Caco-2 (cell line): ENCODE measurements at regions of chr6 and their contacts with region 1.

Region 1: DNA sequence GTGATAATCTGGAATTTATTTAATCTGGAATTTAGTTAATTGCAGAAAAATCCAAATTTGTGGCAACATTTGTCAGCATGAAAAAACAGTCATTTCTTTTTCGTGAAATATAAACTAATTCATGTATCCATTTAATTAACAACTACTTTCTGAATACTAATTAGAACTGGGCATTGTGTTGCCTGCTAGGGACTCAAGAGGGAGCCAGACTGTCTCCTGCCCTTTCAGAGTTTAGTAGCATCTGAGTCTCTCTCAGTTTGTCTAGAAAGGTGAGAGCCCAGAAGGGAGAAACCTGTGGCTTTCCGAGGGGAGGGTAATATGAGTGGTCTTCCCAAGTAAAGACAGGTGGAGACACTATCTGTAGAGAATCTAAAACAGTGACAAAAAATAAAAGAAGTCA is 210.9 kb upstream of the HDDC2 start:
- DNase-seq: no peak
- H3K4me3 ChIP-seq: no peak overlapping the region
- H3K4me3 Mint-ChIP-seq: no peak overlapping the region
- H3K27ac Mint-ChIP-seq: no peak overlapping the region
- H3K4me1 ChIP-seq: no peaks in the 10 kb centered on the region
- H3K4me1 Mint-ChIP-seq: no peaks in the 10 kb centered on the region
- H3K27me3 ChIP-seq: no peaks in the 10 kb centered on the region
- H3K27me3 Mint-ChIP-seq: peaks cover 7% of the 10 kb centered on the region
- CTCF ChIP-seq: no peak

Region 2: GRCh38 chr6:125498606-125499005 is 14.0 kb before region 1 on chr6:
- CTCF ChIA-PET with region 1: no interaction called
- POLR2A ChIA-PET with region 1: no interaction called
- intact Hi-C with region 1: no loop called
- DNase-seq: no peak
- H3K4me3 ChIP-seq: no peak overlapping the region
- H3K4me3 Mint-ChIP-seq: no peak overlapping the region
- H3K27ac Mint-ChIP-seq: no peak overlapping the region
- H3K4me1 ChIP-seq: no peaks in the 10 kb centered on the region
- H3K4me1 Mint-ChIP-seq: no peaks in the 10 kb centered on the region
- H3K27me3 ChIP-seq: no peaks in the 10 kb centered on the region
- H3K27me3 Mint-ChIP-seq: no peaks in the 10 kb centered on the region
- CTCF ChIP-seq: no peak

Region 3: DNA sequence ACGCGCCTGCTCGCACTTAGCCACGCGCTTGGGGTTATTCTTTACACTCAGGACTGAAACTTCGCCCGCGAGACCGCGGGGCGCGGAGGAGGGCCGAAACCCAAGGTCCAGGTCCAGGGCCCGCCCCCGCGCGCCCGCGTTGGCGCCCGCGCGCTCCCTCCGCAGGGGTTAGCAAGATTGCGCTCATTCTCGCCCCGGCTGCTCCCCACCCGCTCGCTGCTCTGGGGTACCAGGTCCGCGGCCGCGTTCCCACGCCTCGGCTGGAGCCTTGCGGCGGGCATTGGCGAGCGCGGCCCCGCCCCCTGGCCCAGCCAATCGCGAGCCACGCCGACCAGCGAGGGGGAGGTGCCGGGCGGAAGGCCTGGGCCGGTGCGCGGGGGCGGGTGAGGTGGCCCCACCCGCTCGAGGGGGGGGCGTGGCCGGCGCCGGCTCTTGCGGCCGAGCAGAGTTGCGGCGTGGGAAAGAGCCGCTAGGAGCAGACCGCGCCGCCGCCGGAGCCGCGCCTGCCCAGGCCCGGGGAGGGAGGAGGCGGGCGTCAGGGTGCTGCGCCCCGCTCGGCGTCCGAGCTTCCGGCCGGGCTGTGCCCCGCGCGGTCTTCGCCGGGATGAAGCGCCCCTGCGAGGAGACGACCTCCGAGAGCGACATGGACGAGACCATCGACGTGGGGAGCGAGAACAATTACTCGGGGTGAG is 236.7 kb after region 1 on chr6 and contains the start of gene HEY2:
- CTCF ChIA-PET with region 1: no interaction called
- POLR2A ChIA-PET with region 1: no interaction called
- intact Hi-C with region 1: loop called (anchors 5 kb)
- DNase-seq: peak; percentile 86 to 96
- H3K4me3 ChIP-seq: peak within 1 kb of the TSS; percentile 48
- H3K4me3 Mint-ChIP-seq: peak within 1 kb of the TSS; percentile 93
- H3K27ac Mint-ChIP-seq: no peak within 1 kb of the TSS
- H3K4me1 ChIP-seq: peaks cover 11% of the 10 kb centered on the region; the same call in 1 of the 2 replicates
- H3K4me1 Mint-ChIP-seq: peaks cover 22% of the 10 kb centered on the region
- H3K27me3 ChIP-seq: no peaks in the 10 kb centered on the region; the same call in none of the 2 replicates
- H3K27me3 Mint-ChIP-seq: peaks cover 33% of the 10 kb centered on the region
- CTCF ChIP-seq: no peak
- total RNA-seq, gene HEY2: 0.12 TPM in 1 of 2 replicates, not detected in the other

Region 4: GRCh38 chr6:125765944-125766343 is 253.3 kb after region 1 on chr6:
- CTCF ChIA-PET with region 1: no interaction called
- POLR2A ChIA-PET with region 1: no interaction called
- intact Hi-C with region 1: loop called (anchors 5 kb)
- DNase-seq: no peak
- H3K4me3 ChIP-seq: no peak overlapping the region
- H3K4me3 Mint-ChIP-seq: no peak overlapping the region
- H3K27ac Mint-ChIP-seq: no peak overlapping the region
- H3K4me1 ChIP-seq: no peaks in the 10 kb centered on the region
- H3K4me1 Mint-ChIP-seq: no peaks in the 10 kb centered on the region
- H3K27me3 ChIP-seq: no peaks in the 10 kb centered on the region
- H3K27me3 Mint-ChIP-seq: peaks cover 3% of the 10 kb centered on the region
- CTCF ChIP-seq: no peak

Region 5: GRCh38 chr6:125931733-125932450 is 419.3 kb after region 1 on chr6:
- CTCF ChIA-PET with region 1: no interaction called
- POLR2A ChIA-PET with region 1: no interaction called
- intact Hi-C with region 1: no loop called
- DNase-seq: no peak
- H3K4me3 ChIP-seq: no peak overlapping the region
- H3K4me3 Mint-ChIP-seq: no peak overlapping the region
- H3K27ac Mint-ChIP-seq: peak overlapping the region; percentile 37
- H3K4me1 ChIP-seq: 0 out of 2 replicates have a peak, but pooled peaks cover 4% of the 10 kb centered on the region
- H3K4me1 Mint-ChIP-seq: no peaks in the 10 kb centered on the region
- H3K27me3 ChIP-seq: no peaks in the 10 kb centered on the region
- H3K27me3 Mint-ChIP-seq: no peaks in the 10 kb centered on the region
- CTCF ChIP-seq: no peak